ENCODE measurements at regions of chr7 and their contacts with region 1.

Region 1: DNA sequence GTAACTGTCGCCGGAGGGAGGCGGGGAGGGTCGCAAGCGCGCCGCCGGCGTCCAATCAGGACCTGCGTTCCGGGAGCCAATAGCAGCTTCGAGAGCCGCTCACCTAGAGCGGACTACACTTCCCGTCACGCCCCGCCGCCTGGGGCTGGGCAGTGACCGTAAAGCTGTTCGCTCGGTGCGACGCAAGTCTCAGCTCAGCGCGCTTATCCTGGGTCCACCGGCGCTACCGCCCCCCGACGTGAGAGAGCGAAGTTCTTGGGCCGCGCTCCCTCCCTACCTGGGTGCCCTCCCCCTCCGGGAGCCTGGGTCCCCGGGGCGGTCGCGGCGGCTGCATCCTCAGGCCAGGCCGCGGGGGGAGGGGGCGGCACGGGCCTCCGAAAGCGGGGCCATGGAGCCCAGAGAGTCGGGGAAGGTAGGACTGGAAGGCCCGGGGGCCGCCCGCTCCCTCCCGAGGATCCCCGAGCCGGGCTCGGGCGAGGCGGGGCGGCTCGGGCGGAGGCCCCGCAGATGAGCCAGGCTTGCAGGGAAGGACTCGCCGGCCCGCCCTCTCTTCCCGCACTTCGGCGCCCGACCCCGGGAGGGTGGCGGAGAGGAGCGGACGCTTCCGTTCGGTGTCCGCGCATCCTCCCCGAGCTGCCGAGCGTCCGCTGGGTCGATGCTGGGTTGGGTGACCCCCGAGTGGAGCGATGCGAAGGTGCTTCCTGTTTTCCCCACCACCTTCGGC is at the start of gene ZNF862:
- DNase-seq: peak; percentile 99
- total RNA-seq, gene ZNF862: 12.8 TPM

Region 2: GRCh38 chr7:149714910-149715471 is 123.4 kb before region 1 on chr7:
- intact Hi-C with region 1: loop called (anchors 5 kb)
- DNase-seq: no peak

Region 3: GRCh38 chr7:149771721-149772240 is 66.6 kb before region 1 on chr7:
- intact Hi-C with region 1: loop called (anchors 1 kb)
- DNase-seq: peak; percentile 97

Region 4: GRCh38 chr7:149873074-149873969 is 34.9 kb after region 1 on chr7 and contains the start of gene ATP6V0E2:
- intact Hi-C with region 1: loop called (anchors 5 kb)
- DNase-seq: peak; percentile 98
- total RNA-seq, gene ATP6V0E2: 80.2 TPM

Measured in cardiac septum (tissue), 1 donor.